K562 (cell line): ENCODE measurements at regions of chr15 and their contacts with region 1.

Region 1: GRCh38 chr15:48810414-48811317 is at the start of gene CEP152:
- DNase-seq: peak; percentile 97 to 100 (median 98)
- ATAC-seq: peak; percentile 97
- H3K4me3 ChIP-seq: peak within 1 kb of the TSS; percentile 80
- H3K27ac ChIP-seq: peak within 1 kb of the TSS; percentile 93
- H3K4me1 ChIP-seq: peaks cover 5 to 8% of the 10 kb centered on the region in 2 experiments; a peak in 3 of 5 replicates
- H3K27me3 ChIP-seq: no peaks in the 10 kb centered on the region
- CTCF ChIP-seq: peak in 1 of 3 experiments; percentile 30; a peak in 2 of 6 replicates
- EP300 ChIP-seq: peak; percentile 22; the same call in 1 of the 2 replicates
- POLR2A ChIP-seq: peak; percentile 90
- RAD21 ChIP-seq: no peak
- polyA plus RNA-seq, gene CEP152: 12.0 to 14.2 TPM

Region 2: GRCh38 chr15:48352474-48353072 is 458.1 kb before region 1 on chr15:
- CTCF ChIA-PET with region 1: no interaction called
- POLR2A ChIA-PET with region 1: no interaction called
- in situ Hi-C with region 1: loop called (anchors 25 kb)
- intact Hi-C with region 1: no loop called
- DNase-seq: peak; percentile 56 to 83 (median 62)
- ATAC-seq: peak; percentile 96
- H3K4me3 ChIP-seq: no peak overlapping the region
- H3K27ac ChIP-seq: no peak overlapping the region
- H3K4me1 ChIP-seq: no peaks in the 10 kb centered on the region; a peak in 2 of 5 replicates
- H3K27me3 ChIP-seq: no peaks in the 10 kb centered on the region
- CTCF ChIP-seq: peak; percentile 72 to 84 (median 79)
- EP300 ChIP-seq: no peak
- POLR2A ChIP-seq: no peak
- RAD21 ChIP-seq: peak; percentile 69 to 85

Region 3: DNA sequence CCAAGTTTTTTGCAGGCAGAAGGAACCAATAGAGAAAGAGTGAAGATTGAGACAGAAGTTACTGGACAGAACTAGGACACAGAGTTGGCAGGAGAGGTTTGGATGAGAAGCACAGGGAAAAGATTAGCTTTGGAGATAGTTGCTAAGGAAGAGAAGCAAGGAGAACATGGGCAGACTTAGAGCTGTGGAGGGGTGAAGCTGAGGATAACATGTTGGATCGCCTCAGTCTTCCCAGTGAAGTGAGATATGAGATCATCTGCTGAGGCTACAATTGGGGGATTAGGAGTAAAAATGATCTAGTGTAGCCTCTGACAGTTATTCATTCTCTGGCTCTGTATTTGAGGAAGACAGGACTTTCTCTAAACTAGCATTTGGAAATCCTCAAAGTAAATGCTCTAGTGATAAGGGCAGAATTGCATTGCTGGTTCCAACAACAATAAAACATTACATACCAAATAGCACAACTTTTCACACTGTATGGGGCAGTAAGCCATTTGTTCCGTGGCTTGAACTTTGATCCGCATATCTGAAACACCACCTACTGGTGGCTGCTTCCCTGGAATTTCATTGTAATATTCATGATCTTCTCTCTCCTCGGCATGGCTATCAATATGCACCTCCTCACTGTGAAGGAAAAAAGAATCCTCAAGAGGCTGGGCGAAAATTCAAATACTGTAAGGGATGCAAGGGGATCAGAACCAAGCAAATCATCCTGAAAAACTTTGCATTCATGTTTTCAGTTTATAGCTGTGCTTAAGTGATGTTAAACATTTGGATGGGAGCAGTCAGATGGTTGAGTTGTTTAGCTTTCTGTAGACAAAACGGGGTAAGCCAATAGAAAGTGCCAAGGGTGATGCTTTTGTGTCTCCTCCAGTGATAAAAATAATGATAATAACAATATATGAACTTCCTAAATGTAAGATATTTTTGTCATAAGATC is 45.1 kb after region 1 on chr15:
- CTCF ChIA-PET with region 1: no interaction called
- POLR2A ChIA-PET with region 1: no interaction called
- in situ Hi-C with region 1: no loop called
- intact Hi-C with region 1: loop called (anchors 5 kb)
- DNase-seq: peak in 3 of 4 experiments; percentile 15 to 65 (median 40)
- ATAC-seq: peak; percentile 83
- H3K4me3 ChIP-seq: no peak overlapping the region
- H3K27ac ChIP-seq: no peak overlapping the region
- H3K4me1 ChIP-seq: peaks cover 0 to 31% of the 10 kb centered on the region in 2 experiments; a peak in 4 of 5 replicates
- H3K27me3 ChIP-seq: no peaks in the 10 kb centered on the region
- CTCF ChIP-seq: peak; percentile 48 to 66 (median 64); a peak in 5 of 6 replicates
- EP300 ChIP-seq: no peak
- POLR2A ChIP-seq: no peak
- RAD21 ChIP-seq: peak; percentile 58 to 80